B cell (primary cell): ENCODE measurements at regions of chr15 and their contacts with region 1.

Region 1: DNA sequence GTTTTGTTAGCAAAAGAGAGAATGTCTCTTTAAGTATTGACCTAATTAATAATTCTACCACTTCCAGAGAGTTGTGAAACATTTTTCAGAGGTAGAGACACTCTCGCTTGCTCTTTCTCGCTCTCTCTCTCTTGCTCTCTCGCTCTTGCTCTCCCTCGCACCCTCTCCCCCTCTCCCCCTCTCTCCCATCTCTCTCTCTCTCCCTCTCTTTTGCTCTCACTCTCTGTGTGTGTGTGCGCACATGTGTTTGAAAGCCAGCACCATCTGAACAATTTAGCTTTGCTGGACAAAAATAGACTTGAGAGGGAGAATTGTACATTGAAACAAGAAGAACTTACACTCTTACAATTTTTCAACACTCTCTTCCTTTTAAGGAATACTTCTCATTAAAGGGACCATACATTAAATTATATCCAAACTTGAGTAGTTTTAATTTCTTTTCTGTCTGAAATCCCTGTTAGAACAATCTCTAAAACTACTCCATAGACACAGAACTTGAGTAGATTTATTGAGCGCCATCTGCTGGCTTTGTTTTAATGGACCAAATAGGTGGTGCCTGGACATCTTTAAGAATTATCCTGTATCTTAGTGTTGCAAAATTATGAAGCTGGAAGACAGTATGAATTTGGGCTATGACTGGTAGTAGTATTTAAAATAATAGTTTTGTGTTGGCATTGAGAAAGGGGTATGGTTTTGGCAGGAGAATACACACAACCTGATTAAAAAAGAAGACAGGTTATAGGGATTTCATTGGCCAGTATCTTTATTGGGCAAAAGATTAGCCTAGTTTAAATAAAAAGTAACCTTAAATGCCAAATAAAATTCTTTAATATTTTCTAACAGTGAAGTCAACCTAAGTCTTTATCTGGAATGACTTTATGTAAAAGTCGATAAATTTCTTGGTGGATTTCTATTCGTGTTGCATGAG is 124.6 kb downstream of the AKAP13 start:
- DNase-seq: peak; percentile 71
- ATAC-seq: no peak
- H3K4me3 ChIP-seq: no peak overlapping the region
- H3K4me3 Mint-ChIP-seq: no peak overlapping the region
- H3K27ac ChIP-seq: peak overlapping the region in 1 of 2 donors; percentile 35
- H3K27ac Mint-ChIP-seq: no peak overlapping the region
- H3K4me1 ChIP-seq: peaks cover 13 to 16% of the 10 kb centered on the region in 2 donors
- H3K4me1 Mint-ChIP-seq: peaks cover 48% of the 10 kb centered on the region
- H3K27me3 ChIP-seq: no peaks in the 10 kb centered on the region
- H3K27me3 Mint-ChIP-seq: no peaks in the 10 kb centered on the region
- CTCF ChIP-seq: peak; percentile 74

Region 2: GRCh38 chr15:85049805-85050204 is 455.2 kb before region 1 on chr15:
- CTCF ChIA-PET with region 1: no interaction called
- POLR2A ChIA-PET with region 1: no interaction called
- intact Hi-C with region 1: no loop called
- DNase-seq: no peak
- ATAC-seq: no peak
- H3K4me3 ChIP-seq: no peak overlapping the region
- H3K4me3 Mint-ChIP-seq: no peak overlapping the region
- H3K27ac ChIP-seq: no peak overlapping the region
- H3K27ac Mint-ChIP-seq: no peak overlapping the region
- H3K4me1 ChIP-seq: peaks cover 3 to 13% of the 10 kb centered on the region in 2 donors
- H3K4me1 Mint-ChIP-seq: peaks cover 40% of the 10 kb centered on the region
- H3K27me3 ChIP-seq: no peaks in the 10 kb centered on the region
- H3K27me3 Mint-ChIP-seq: no peaks in the 10 kb centered on the region
- CTCF ChIP-seq: no peak

Region 3: DNA sequence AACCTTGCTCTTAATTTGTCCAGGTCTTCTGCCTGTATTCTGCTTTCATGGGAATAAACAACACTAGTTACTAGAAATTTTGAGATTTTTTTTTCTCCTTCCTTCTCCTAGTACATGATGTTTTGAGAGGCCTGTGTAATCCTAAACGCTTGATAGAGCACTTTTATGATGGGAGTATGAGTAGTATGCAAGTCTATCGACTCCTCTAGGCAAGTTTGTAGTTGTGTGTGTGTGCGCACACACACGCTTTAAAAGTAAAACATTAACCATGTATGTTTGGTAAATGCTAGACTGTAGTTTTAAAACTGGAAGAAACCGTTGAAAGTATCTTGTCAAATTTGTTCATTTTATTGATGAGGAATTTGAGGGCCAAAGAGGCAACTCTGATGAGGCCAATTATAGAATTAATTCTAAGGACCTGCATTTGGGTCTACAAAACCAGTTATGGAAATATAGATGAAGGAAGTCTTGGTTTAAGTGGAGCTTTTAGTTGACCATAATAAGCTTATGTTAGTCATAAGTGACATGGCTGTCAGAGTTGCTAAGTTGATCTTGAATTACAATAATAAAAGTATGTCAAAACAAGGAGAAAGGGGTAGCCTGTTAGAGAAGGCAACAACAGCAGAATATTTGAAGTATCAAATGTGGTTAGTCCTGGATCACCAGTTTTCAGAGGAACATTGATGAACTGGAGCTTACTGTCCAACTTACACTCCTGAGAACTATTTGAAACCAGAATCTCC is 77.6 kb before region 1 on chr15:
- CTCF ChIA-PET with region 1: no interaction called
- POLR2A ChIA-PET with region 1: no interaction called
- intact Hi-C with region 1: no loop called
- DNase-seq: no peak
- ATAC-seq: no peak
- H3K4me3 ChIP-seq: no peak overlapping the region
- H3K4me3 Mint-ChIP-seq: no peak overlapping the region
- H3K27ac ChIP-seq: no peak overlapping the region
- H3K27ac Mint-ChIP-seq: no peak overlapping the region
- H3K4me1 ChIP-seq: peaks cover 36 to 59% of the 10 kb centered on the region in 2 donors
- H3K4me1 Mint-ChIP-seq: peaks cover 84% of the 10 kb centered on the region
- H3K27me3 ChIP-seq: no peaks in the 10 kb centered on the region
- H3K27me3 Mint-ChIP-seq: no peaks in the 10 kb centered on the region
- CTCF ChIP-seq: no peak

Region 4: GRCh38 chr15:85494048-85494793 is 10.8 kb before region 1 on chr15:
- CTCF ChIA-PET with region 1: interaction called, 30 read pairs
- POLR2A ChIA-PET with region 1: no interaction called
- intact Hi-C with region 1: no loop called
- DNase-seq: no peak
- ATAC-seq: no peak
- H3K4me3 ChIP-seq: no peak overlapping the region
- H3K4me3 Mint-ChIP-seq: no peak overlapping the region
- H3K27ac ChIP-seq: peak overlapping the region in 1 of 2 donors; percentile 13
- H3K27ac Mint-ChIP-seq: peak overlapping the region; percentile 8
- H3K4me1 ChIP-seq: peaks cover 42 to 45% of the 10 kb centered on the region in 2 donors
- H3K4me1 Mint-ChIP-seq: peaks cover 79% of the 10 kb centered on the region
- H3K27me3 ChIP-seq: no peaks in the 10 kb centered on the region
- H3K27me3 Mint-ChIP-seq: no peaks in the 10 kb centered on the region
- CTCF ChIP-seq: no peak

Region 5: GRCh38 chr15:85543741-85544155 is 38.7 kb after region 1 on chr15:
- CTCF ChIA-PET with region 1: interaction called, 11 read pairs
- POLR2A ChIA-PET with region 1: no interaction called
- intact Hi-C with region 1: loop called (anchors 5 kb)
- DNase-seq: peak; percentile 60
- ATAC-seq: peak; percentile 67
- H3K4me3 ChIP-seq: peak overlapping the region in 1 of 5 experiments; percentile 42
- H3K4me3 Mint-ChIP-seq: peak overlapping the region; percentile 60
- H3K27ac ChIP-seq: peak overlapping the region; percentile 28 to 42
- H3K27ac Mint-ChIP-seq: peak overlapping the region; percentile 62
- H3K4me1 ChIP-seq: peaks cover 54 to 59% of the 10 kb centered on the region in 2 donors
- H3K4me1 Mint-ChIP-seq: peaks cover 67% of the 10 kb centered on the region
- H3K27me3 ChIP-seq: no peaks in the 10 kb centered on the region
- H3K27me3 Mint-ChIP-seq: no peaks in the 10 kb centered on the region
- CTCF ChIP-seq: no peak